K562 (cell line): ENCODE measurements at regions of chrX and their contacts with region 1.

Region 1: GRCh38 chrX:2967998-2968909 is 38.1 kb upstream of the ARSH start:
- DNase-seq: peak in 1 of 4 experiments; percentile 33
- ATAC-seq: peak; percentile 87
- H3K4me3 ChIP-seq: no peak overlapping the region
- H3K27ac ChIP-seq: no peak overlapping the region
- H3K4me1 ChIP-seq: no peaks in the 10 kb centered on the region; a peak in 1 of 5 replicates
- H3K27me3 ChIP-seq: peaks cover 6 to 23% of the 10 kb centered on the region in 2 experiments; a peak in 3 of 5 replicates
- CTCF ChIP-seq: peak in 2 of 3 experiments; percentile 32 to 33; a peak in 4 of 6 replicates
- EP300 ChIP-seq: no peak
- POLR2A ChIP-seq: no peak
- RAD21 ChIP-seq: peak; percentile 23 to 56; a peak in 2 of 4 replicates

Region 2: GRCh38 chrX:2875798-2876399 is 92.4 kb before region 1 on chrX:
- CTCF ChIA-PET with region 1: no interaction called
- POLR2A ChIA-PET with region 1: no interaction called
- in situ Hi-C with region 1: no loop called
- intact Hi-C with region 1: loop called (anchors 5 kb)
- DNase-seq: no peak
- ATAC-seq: peak; percentile 33; the same call in 1 of the 3 replicates
- H3K4me3 ChIP-seq: no peak overlapping the region
- H3K27ac ChIP-seq: peak overlapping the region; percentile 59; the same call in 2 of the 3 replicates
- H3K4me1 ChIP-seq: peaks cover 12 to 34% of the 10 kb centered on the region in 2 experiments; a peak in 4 of 5 replicates
- H3K27me3 ChIP-seq: no peaks in the 10 kb centered on the region
- CTCF ChIP-seq: peak in 2 of 3 experiments; percentile 27 to 38; a peak in 2 of 6 replicates
- EP300 ChIP-seq: no peak
- POLR2A ChIP-seq: no peak
- RAD21 ChIP-seq: 0 out of 4 replicates have a peak, but pooled peaks of 1 of the 2 experiments have one; percentile 12